ENCODE measurements at regions of chr3 and their contacts with region 1.

Region 1: DNA sequence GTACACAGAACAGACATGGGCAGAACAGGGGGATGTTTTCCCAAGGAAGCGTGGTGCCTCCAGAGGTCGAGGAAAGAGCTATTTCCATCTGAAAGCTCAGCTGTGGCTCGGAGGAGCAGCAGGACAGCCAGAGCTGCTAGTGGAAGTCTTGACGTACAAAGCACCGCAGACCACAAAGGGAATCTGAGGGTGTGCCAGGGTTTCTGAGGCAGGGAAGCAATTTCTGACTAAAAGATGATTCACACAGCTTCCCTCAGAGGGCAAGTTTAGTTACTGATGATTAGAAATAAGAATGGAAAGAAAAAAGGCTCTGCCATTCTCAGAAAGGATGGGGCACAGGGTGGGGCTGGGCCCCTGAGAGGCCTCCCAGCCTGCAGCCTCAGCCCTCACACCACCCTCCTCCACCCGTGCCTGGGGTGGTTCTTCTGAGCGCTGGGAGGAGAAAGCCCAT is 45.8 kb upstream of the SEC13 start:
- DNase-seq: no peak
- H3K4me3 Mint-ChIP-seq: no peak overlapping the region
- H3K27ac Mint-ChIP-seq: peak overlapping the region; percentile 61
- H3K4me1 Mint-ChIP-seq: peaks cover 28% of the 10 kb centered on the region
- H3K27me3 Mint-ChIP-seq: no peaks in the 10 kb centered on the region

Region 2: DNA sequence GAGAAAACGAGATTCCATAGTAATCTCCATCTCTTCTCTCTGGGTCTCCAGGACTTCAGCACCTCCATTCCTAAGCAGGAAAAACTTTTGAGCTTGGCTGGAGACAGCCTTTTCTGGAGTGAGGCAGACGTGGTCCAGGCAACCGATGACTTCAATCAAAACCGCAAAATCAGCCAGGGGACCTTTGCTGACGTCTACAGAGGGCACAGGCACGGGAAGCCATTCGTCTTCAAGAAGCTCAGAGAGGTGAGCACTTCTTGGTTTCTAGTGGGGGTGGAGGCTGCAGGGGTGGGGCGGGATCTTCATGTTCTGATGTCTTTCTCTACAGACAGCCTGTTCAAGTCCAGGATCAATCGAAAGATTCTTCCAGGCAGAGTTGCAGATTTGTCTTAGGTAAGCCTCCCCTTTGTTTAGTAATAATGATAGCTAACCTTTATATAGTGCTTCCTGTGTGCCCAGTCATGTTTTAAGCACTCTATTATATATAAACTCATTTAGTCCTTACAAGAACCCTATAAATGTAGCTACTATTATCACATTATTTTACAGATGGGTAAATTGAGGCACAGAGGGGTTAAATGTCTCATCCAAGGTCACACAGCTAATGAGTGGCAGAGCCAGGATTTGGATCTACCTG is 153.4 kb before region 1 on chr3:
- intact Hi-C with region 1: no loop called
- DNase-seq: no peak
- H3K4me3 Mint-ChIP-seq: no peak overlapping the region
- H3K27ac Mint-ChIP-seq: no peak overlapping the region
- H3K4me1 Mint-ChIP-seq: peaks cover 7% of the 10 kb centered on the region
- H3K27me3 Mint-ChIP-seq: no peaks in the 10 kb centered on the region

Region 3: DNA sequence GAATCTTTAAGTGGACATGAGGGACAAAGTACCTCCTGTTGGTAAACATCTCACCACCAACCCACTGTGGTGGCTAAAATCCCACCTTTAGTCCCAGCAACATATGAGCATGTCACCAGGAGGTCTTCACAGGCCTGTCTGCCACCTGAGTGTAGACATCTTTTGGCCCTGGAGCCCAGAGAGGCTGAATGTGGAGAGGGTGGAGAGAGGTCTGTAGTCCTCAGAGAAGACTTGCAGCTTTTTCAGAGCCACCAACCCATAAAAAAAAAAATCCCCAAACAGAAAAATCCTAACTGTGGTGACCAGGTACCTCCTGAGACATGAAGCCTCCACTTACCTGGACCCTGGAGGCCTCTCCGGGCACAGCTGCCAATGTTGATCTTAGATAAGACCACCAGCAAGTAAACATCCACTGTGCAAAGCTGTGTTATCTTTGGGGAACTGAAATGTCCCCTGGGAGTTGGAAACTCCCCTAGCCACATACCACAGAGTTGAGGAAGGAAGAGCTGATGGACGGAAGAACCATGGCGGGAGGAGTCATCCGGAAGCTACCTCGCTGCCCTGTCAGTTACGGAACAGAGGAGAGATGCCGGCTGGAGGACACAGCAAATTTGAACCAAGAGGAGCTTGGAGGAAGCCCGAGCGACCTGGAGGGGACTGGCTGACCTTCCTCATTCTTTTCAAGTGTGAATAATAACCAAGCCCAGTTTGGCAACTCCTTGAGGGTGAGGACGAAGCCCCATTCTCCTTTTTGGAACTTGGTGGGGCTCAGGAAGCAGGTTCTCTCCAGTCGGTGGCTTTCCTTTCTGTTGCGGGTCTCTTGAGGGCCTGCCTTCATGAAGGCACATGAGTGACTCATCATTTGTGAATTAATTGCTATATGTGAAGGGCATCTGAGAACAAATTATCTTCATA is 73.9 kb before region 1 on chr3 and contains the start of gene GHRL:
- intact Hi-C with region 1: no loop called
- DNase-seq: no peak
- H3K4me3 Mint-ChIP-seq: no peak within 1 kb of the TSS
- H3K27ac Mint-ChIP-seq: peak within 1 kb of the TSS; percentile 61
- H3K4me1 Mint-ChIP-seq: peaks cover 13% of the 10 kb centered on the region
- H3K27me3 Mint-ChIP-seq: no peaks in the 10 kb centered on the region
- total RNA-seq, gene GHRL: 0.98 and 2.1 TPM in 2 replicates

Region 4: DNA sequence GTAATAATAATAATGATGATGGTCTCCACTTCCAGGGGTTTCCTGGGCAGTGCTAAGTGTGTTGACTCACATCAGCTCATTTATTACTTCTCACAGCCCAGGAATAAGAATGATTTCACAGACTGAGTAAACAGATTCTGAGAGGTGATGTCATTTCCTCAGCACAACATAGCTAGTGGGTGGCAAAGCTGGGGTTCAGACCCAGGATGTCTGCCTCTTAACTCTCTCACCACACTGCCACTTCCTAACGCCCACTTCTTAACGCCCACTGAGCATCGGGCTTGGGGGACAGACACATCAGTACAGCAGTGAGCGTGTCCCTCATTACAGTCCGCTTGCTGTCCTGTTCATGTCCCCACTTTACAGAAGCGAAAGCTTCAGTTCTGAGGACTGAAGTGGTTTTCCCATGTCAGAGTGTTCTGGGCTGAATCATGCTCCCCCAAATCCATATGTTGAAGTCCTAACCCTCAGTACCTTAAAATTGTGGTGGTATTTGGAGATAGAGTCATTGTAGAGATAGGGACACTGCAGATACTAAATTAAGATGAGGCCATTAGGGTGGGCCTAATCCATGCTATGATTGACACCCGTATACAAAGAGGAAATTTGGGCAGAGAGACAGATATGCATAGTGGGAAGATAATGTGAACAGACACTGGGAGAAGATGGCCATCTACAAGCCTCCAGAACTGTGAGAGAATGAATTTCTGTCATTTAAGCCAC is 70.8 kb after region 1 on chr3:
- intact Hi-C with region 1: loop called (anchors 2 kb)
- DNase-seq: peak; percentile 40
- H3K4me3 Mint-ChIP-seq: no peak overlapping the region
- H3K27ac Mint-ChIP-seq: peak overlapping the region; percentile 47
- H3K4me1 Mint-ChIP-seq: peaks cover 25% of the 10 kb centered on the region
- H3K27me3 Mint-ChIP-seq: no peaks in the 10 kb centered on the region

Region 5: GRCh38 chr3:10542518-10542917 is 175.8 kb after region 1 on chr3:
- intact Hi-C with region 1: no loop called
- DNase-seq: no peak
- H3K4me3 Mint-ChIP-seq: no peak overlapping the region
- H3K27ac Mint-ChIP-seq: no peak overlapping the region
- H3K4me1 Mint-ChIP-seq: no peaks in the 10 kb centered on the region
- H3K27me3 Mint-ChIP-seq: peaks cover 16% of the 10 kb centered on the region